SK-N-SH (cell line): ENCODE measurements at regions of chr11 and their contacts with region 1.

Region 1: GRCh38 chr11:45964911-45965389 is 42.5 kb downstream of the LARGE2 start:
- DNase-seq: peak; percentile 81
- H3K4me3 ChIP-seq: no peak overlapping the region; a peak in 1 of 4 replicates
- H3K27ac ChIP-seq: peak overlapping the region in 1 of 2 experiments; percentile 2; a peak in 1 of 4 replicates
- H3K4me1 ChIP-seq: no peaks in the 10 kb centered on the region; a peak in 1 of 4 replicates
- H3K27me3 ChIP-seq: no peaks in the 10 kb centered on the region
- CTCF ChIP-seq: peak; percentile 96
- EP300 ChIP-seq: no peak
- RAD21 ChIP-seq: peak; percentile 91

Region 2: DNA sequence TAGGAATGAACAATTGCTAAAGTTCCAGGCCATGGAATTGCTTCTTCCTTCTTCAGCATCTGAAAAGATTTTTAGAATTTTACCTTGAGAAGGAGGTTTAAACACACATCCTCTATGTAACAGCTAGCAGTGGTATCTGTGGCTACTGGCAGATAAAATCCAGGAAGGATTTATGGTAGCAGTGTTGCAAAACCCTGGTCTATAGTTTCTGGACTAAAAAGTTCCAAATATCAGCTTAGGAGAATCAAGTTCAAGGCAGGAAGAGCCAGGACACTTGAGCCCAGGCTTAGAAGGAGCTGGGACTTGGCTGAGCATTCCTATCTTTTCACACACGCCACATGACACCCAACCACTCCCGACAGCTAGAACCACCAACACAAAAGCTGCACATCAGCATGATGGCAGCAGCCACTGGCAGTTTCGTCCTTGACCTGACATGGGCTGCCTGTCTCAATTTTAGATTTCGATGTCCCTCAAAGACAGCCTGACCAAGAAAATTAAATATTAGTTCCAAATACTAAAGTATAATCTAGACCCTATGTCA is 28.4 kb before region 1 on chr11:
- CTCF ChIA-PET with region 1: interaction called, 11 read pairs
- POLR2A ChIA-PET with region 1: no interaction called
- DNase-seq: no peak
- H3K4me3 ChIP-seq: no peak overlapping the region
- H3K27ac ChIP-seq: no peak overlapping the region
- H3K4me1 ChIP-seq: no peaks in the 10 kb centered on the region; a peak in 1 of 4 replicates
- H3K27me3 ChIP-seq: no peaks in the 10 kb centered on the region
- CTCF ChIP-seq: no peak
- EP300 ChIP-seq: no peak
- RAD21 ChIP-seq: no peak

Region 3: GRCh38 chr11:45982656-45983470 is 17.9 kb after region 1 on chr11:
- CTCF ChIA-PET with region 1: interaction called, 22 read pairs
- POLR2A ChIA-PET with region 1: no interaction called
- DNase-seq: peak; percentile 21
- H3K4me3 ChIP-seq: no peak overlapping the region
- H3K27ac ChIP-seq: peak overlapping the region in 1 of 2 experiments; percentile 53; a peak in 1 of 4 replicates
- H3K4me1 ChIP-seq: peaks cover 4 to 36% of the 10 kb centered on the region in 2 experiments; a peak in 3 of 4 replicates
- H3K27me3 ChIP-seq: no peaks in the 10 kb centered on the region
- CTCF ChIP-seq: no peak
- EP300 ChIP-seq: no peak
- RAD21 ChIP-seq: no peak

Region 4: GRCh38 chr11:46001448-46001914 is 36.5 kb after region 1 on chr11:
- CTCF ChIA-PET with region 1: interaction called, 93 read pairs
- POLR2A ChIA-PET with region 1: no interaction called
- DNase-seq: no peak
- H3K4me3 ChIP-seq: no peak overlapping the region
- H3K27ac ChIP-seq: peak overlapping the region; percentile 0 to 28; a peak in 1 of 4 replicates
- H3K4me1 ChIP-seq: peaks cover 5 to 39% of the 10 kb centered on the region in 2 experiments; a peak in 3 of 4 replicates
- H3K27me3 ChIP-seq: no peaks in the 10 kb centered on the region
- CTCF ChIP-seq: no peak
- EP300 ChIP-seq: no peak
- RAD21 ChIP-seq: no peak

Region 5: DNA sequence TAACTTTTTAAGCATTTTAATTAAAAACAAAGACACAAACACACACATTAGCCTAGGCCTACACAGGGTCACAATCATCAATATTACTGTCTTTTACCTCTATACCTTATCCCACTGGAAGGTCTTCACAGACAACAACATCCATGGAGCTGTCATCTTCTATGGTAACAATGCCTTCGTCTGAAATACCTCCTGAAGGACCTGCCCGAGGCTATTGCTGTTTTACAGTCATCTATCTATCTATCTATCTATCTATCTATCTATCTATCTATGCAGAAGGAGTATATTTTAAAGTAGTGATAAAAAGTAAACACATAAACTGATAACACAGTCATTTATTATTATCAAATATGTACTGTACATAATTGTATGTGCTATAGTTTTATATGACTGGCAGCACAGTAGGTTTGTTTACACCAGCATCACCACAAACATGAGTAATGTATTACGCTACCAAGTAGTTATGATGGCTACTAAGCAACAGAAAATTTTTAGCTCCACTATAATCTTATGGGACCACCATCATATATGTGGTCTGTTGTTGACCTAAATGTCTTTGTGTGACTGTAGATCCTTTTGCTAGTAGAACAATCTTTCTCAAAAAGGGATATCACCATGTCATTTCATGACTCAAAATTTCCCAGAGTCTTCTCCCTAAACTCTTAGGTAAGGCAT is 50.9 kb after region 1 on chr11:
- CTCF ChIA-PET with region 1: interaction called, 15 read pairs
- POLR2A ChIA-PET with region 1: no interaction called
- DNase-seq: no peak
- H3K4me3 ChIP-seq: no peak overlapping the region
- H3K27ac ChIP-seq: no peak overlapping the region
- H3K4me1 ChIP-seq: no peaks in the 10 kb centered on the region
- H3K27me3 ChIP-seq: no peaks in the 10 kb centered on the region
- CTCF ChIP-seq: no peak
- EP300 ChIP-seq: no peak
- RAD21 ChIP-seq: no peak